ENCODE measurements at regions of chr1 and their contacts with region 1.

Region 1: DNA sequence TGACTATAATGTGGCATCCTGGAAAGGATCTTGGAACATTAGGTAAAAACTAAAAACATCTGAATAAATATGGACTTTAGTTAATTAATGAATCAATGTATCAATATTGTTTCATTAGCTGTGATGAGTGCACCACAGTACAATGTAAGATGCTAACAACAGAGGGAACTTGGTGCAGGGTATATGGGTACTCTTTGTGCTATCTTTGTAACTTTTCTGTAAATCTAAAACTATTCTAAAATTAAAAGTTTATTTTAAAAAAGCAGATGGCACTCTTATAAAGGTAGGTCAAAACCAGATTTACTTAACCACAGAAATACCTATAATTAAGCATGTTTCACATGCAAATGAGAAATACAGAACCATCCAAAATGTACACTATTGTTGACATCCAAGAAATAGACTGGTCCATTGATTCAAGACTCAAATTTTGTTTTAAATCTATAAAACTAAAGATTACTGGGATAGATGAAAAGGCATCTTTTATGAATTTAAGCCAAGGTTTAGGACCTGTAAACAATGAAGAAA is 38.4 kb downstream of the ACBD3 start:
- DNase-seq: no peak
- ATAC-seq: no peak
- H3K4me3 ChIP-seq: no peak overlapping the region
- H3K4me3 Mint-ChIP-seq: no peak overlapping the region
- H3K27ac ChIP-seq: no peak overlapping the region
- H3K27ac Mint-ChIP-seq: no peak overlapping the region
- H3K4me1 ChIP-seq: no peaks in the 10 kb centered on the region
- H3K4me1 Mint-ChIP-seq: no peaks in the 10 kb centered on the region
- H3K27me3 ChIP-seq: no peaks in the 10 kb centered on the region
- H3K27me3 Mint-ChIP-seq: no peaks in the 10 kb centered on the region

Region 2: GRCh38 chr1:226166341-226166740 is 18.2 kb after region 1 on chr1:
- CTCF ChIA-PET with region 1: no interaction called
- POLR2A ChIA-PET with region 1: interaction called in 1 of 2 experiments, 10 read pairs
- DNase-seq: no peak
- ATAC-seq: no peak
- H3K4me3 ChIP-seq: no peak overlapping the region
- H3K4me3 Mint-ChIP-seq: no peak overlapping the region
- H3K27ac ChIP-seq: no peak overlapping the region
- H3K27ac Mint-ChIP-seq: no peak overlapping the region
- H3K4me1 ChIP-seq: no peaks in the 10 kb centered on the region
- H3K4me1 Mint-ChIP-seq: peaks cover 4 to 18% (median 11%) of the 10 kb centered on the region in 3 donors
- H3K27me3 ChIP-seq: no peaks in the 10 kb centered on the region
- H3K27me3 Mint-ChIP-seq: no peaks in the 10 kb centered on the region

Region 3: DNA sequence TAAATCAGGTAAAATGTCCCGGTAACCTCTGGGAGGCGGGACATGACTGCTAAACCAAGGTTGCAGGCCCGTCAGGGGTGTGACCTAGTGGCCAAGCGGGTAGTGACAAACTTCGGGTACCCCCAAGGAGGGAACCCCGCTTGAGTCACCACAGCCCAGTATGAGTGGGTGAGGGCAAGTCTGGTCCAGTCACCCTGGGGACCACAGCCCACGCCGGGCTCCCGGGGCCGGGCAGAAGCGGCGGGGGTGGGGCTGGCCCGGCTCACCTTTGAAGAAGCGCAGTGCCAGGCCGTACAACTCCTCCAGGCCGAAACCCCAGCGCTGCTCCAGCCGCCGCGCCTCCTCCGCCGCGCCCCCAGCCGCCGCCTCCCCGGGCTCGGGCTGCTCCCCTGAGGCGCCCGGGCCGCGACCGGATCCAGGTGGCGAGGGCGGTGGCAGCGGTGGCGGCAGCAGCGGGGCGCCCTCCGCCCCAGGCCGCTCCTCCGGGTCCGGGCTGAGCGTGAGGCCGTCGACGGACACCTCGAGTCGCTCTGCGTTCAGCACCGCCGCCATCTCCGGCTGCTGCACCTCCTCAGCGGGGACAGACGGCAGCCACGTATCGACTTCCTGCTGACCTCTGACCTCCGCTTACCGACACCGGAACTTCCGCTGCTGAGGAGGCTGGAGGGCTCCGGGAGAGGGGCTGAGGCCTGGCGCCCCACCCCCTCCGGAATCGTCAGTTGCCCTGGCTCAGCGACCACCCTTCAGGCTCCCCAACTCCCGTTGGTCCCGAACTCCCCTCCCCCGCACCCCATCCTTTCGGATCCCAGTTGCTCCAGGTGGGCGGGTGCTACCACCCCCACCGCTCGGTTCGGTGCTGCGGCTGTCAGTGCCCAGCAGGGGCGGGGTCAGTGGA is 38.2 kb after region 1 on chr1 and contains the start of gene ACBD3:
- CTCF ChIA-PET with region 1: no interaction called
- POLR2A ChIA-PET with region 1: no interaction called
- DNase-seq: peak; percentile 55 to 92 (median 84)
- ATAC-seq: peak; percentile 99
- H3K4me3 ChIP-seq: peak within 1 kb of the TSS; percentile 79 to 93
- H3K4me3 Mint-ChIP-seq: peak within 1 kb of the TSS; percentile 94 to 95 (median 94)
- H3K27ac ChIP-seq: peak within 1 kb of the TSS; percentile 88
- H3K27ac Mint-ChIP-seq: peak within 1 kb of the TSS; percentile 94
- H3K4me1 ChIP-seq: peaks cover 13 to 34% of the 10 kb centered on the region in 2 experiments
- H3K4me1 Mint-ChIP-seq: peaks cover 38 to 47% (median 40%) of the 10 kb centered on the region in 3 donors
- H3K27me3 ChIP-seq: no peaks in the 10 kb centered on the region
- H3K27me3 Mint-ChIP-seq: no peaks in the 10 kb centered on the region
- total RNA-seq, gene ACBD3: 21.7 to 26.2 (median 22.5) TPM

Region 4: GRCh38 chr1:226308723-226309315 is 160.6 kb after region 1 on chr1 and contains the start of gene LIN9:
- CTCF ChIA-PET with region 1: no interaction called
- POLR2A ChIA-PET with region 1: no interaction called
- DNase-seq: peak; percentile 73 to 93 (median 88)
- ATAC-seq: peak; percentile 89 to 95 (median 90)
- H3K4me3 ChIP-seq: peak within 1 kb of the TSS; percentile 89 to 100
- H3K4me3 Mint-ChIP-seq: peak within 1 kb of the TSS; percentile 86 to 89 (median 88)
- H3K27ac ChIP-seq: peak within 1 kb of the TSS; percentile 32
- H3K27ac Mint-ChIP-seq: peak within 1 kb of the TSS in 1 of 2 donors; percentile 80
- H3K4me1 ChIP-seq: peaks cover 11 to 14% of the 10 kb centered on the region in 2 experiments
- H3K4me1 Mint-ChIP-seq: peaks cover 18 to 27% (median 22%) of the 10 kb centered on the region in 3 donors
- H3K27me3 ChIP-seq: peaks cover 0 to 5% of the 10 kb centered on the region in 2 experiments
- H3K27me3 Mint-ChIP-seq: peaks cover 0 to 14% of the 10 kb centered on the region in 2 donors
- total RNA-seq, gene LIN9: 1.6 to 7.3 (median 5.3) TPM

Region 5: DNA sequence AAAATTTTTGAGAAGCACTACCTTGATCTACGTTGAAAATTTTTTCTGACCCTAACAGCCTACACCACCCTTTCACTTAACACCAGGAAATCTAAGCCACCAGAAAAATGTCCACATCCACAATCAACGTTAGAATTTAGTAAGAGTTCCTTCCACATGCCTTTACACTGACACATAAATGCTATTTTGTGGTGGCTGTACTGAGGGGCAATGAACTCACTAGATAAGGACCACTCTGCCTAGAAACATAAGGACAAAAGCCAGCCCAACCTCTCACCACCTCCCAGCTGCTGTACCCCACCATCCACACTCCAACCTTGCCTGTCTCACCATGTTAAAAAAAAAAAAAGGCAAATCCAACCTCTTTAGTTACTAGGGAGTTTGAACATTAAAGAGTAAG is 229.9 kb after region 1 on chr1:
- CTCF ChIA-PET with region 1: no interaction called
- POLR2A ChIA-PET with region 1: no interaction called
- DNase-seq: no peak
- ATAC-seq: no peak
- H3K4me3 ChIP-seq: no peak overlapping the region
- H3K4me3 Mint-ChIP-seq: no peak overlapping the region
- H3K27ac ChIP-seq: no peak overlapping the region
- H3K27ac Mint-ChIP-seq: no peak overlapping the region
- H3K4me1 ChIP-seq: no peaks in the 10 kb centered on the region
- H3K4me1 Mint-ChIP-seq: no peaks in the 10 kb centered on the region
- H3K27me3 ChIP-seq: no peaks in the 10 kb centered on the region
- H3K27me3 Mint-ChIP-seq: no peaks in the 10 kb centered on the region

Measured in T-cell (primary cell).